ENCODE measurements at regions of chr5 and their contacts with region 1.

Region 1: GRCh38 chr5:72108202-72109061 is 1.2 kb downstream of the MAP1B start:
- DNase-seq: peak; percentile 64 to 96 (median 76)

Region 2: GRCh38 chr5:71782771-71783770 is 325.4 kb before region 1 on chr5:
- intact Hi-C with region 1: loop called (anchors 2 kb)
- DNase-seq: peak; percentile 74 to 97 (median 88)

Region 3: DNA sequence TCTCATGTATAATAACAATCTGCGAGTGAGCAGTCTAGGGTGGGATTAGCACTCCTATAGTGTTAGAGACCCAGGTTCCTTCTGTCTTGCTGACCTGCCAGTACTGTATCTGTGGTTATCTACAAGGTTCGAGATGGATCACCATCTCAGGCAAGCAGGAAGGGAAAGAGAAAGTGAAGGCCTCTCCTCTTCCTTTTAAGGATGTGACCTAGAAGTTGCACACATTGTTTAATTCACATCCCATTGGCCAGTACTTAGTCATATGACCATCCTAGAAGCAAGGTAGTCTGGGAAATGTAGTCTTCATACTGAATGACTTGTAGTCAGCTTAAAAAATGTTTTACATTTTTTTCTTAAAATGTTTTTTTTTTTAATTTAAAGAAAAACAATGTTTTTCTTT is 220.8 kb before region 1 on chr5:
- intact Hi-C with region 1: no loop called
- DNase-seq: no peak

Region 4: DNA sequence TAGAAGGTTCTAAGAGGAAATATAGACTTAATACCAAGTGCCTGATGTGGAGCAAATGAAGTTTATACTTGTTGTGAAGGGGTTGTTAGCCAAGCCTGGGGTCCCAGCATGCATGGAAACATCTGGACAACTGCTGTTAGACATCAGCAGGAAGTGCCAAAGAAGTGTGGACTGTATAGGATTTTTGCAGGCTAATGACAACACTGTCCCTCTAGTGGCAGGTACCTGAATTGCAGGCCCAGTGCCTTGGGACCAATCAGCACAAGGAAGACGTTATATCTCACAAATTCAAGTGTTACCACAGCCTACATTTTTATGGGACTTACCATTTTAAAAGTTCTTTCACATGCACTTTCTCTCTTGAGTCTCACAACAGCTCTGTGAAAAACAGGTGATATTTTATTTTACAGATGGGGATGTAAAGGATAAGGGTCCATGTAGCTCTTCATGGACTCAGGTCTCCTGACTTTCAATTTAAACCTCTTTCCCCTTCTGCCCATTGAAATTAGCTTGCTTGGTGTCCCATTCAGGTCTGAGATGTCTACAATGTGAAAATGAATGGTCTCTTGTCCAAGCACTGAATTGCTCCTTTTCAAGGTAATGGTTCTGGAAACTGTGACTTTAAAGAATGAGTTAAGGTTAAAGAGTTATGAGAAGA is 90.2 kb before region 1 on chr5:
- intact Hi-C with region 1: loop called (anchors 10 kb)
- DNase-seq: peak in 2 of 10 donors; percentile 22 to 43

Region 5: DNA sequence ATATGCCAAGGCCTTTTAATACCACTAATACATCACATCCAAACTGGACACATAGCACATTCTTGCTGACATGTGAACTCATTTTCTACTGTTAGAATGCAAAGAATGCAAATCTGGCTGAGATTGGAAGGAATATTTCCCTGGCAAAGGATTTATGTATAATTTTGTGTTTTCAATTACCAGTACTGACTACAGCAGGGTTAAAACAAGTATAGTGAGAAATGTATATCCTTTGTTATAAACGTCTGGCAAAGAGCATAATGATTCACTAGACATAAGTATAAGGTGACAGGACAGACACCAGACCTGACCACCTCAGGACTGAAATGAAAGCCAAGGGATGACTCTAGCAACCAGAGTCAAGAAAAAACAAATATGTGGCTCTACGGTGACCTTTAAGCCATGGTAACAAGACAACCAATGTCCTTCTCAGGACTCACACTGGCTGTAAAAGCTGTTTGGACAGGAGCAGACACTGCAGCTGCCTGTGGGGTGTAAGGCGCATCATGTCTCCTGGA is 116.6 kb after region 1 on chr5:
- intact Hi-C with region 1: no loop called
- DNase-seq: no peak

Region 6: DNA sequence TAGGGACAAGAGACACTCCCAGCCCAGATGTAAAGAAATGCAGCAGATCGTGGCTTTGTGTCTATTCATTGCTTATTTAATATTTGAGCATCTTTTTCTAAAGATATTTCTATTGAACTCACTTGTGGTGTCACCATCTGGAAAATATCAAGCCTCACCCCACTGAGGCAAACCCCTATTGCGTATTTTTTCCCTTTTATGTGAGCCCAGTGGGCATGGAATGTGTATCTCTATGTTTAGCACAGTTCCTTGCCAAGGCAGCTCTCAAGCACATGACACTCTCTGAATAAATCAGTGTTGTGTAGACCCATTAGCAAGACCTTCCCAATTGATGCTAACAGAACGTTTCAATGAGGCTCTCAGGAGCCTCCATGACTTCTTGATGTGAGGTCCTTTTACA is 1146.2 kb after region 1 on chr5:
- intact Hi-C with region 1: no loop called
- DNase-seq: no peak

Measured in posterior cingulate gyrus (tissue), 11 donors.